Common myeloid progenitor, CD34-positive (primary cell): ENCODE measurements at regions of chr16 and their contacts with region 1.

Region 1: GRCh38 chr16:50281964-50282538 is 15.7 kb downstream of the ADCY7 start:
- DNase-seq: peak; percentile 98 to 100 (median 99)
- H3K4me3 ChIP-seq: peak overlapping the region in 5 of 7 experiments; percentile 30 to 67 (median 59)
- H3K27ac ChIP-seq: peak overlapping the region; percentile 17 to 74
- H3K4me1 ChIP-seq: peaks cover 28 to 84% (median 78%) of the 10 kb centered on the region in 4 experiments
- H3K27me3 ChIP-seq: no peaks in the 10 kb centered on the region

Region 2: GRCh38 chr16:50234771-50235556 is 47.1 kb before region 1 on chr16:
- CTCF ChIA-PET with region 1: no interaction called
- POLR2A ChIA-PET with region 1: no interaction called
- DNase-seq: no peak
- H3K4me3 ChIP-seq: no peak overlapping the region
- H3K27ac ChIP-seq: no peak overlapping the region
- H3K4me1 ChIP-seq: no peaks in the 10 kb centered on the region
- H3K27me3 ChIP-seq: no peaks in the 10 kb centered on the region

Region 3: DNA sequence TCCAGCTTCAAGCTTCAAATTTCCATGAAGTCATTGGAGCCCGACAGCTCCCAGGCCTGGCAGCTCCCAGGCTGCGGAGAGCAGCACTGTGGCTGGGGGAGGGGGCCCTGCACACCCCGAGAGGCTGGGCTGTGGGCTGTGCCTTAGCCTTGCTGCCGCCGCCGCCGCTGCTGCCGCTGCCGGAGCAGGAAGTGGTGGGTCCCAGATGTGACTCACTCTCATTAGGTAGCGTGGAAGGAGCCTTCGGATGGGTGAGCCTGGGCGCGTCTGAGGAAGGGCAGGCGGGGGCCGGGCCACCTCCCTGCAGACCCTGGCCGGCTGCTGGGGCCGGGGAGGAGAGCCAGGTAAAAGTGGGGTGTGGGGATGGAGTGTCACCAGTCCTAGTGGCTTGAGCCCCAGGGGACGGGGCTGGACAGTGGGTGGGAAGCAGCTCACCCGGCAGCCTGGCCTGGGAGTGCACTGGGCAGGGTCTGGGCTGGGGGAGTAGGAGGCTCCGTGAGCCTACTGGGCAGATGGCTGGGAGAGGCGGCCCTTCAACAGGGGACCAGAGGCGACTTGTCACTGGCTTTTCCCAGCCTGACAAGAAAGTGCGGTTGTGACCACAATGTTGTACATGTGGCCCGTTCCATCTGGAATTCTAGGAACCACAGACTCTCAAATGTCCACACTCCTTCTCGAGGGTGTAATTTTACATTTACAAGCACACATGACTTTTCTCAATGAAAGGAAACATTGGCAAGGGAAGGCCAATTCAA is 15.5 kb before region 1 on chr16 and contains the start of gene ADCY7:
- CTCF ChIA-PET with region 1: interaction called, 274 read pairs
- POLR2A ChIA-PET with region 1: interaction called, 16 read pairs
- DNase-seq: peak; percentile 73 to 94 (median 85)
- H3K4me3 ChIP-seq: peak within 1 kb of the TSS; percentile 36 to 74 (median 64)
- H3K27ac ChIP-seq: peak within 1 kb of the TSS; percentile 33 to 86
- H3K4me1 ChIP-seq: peaks cover 7 to 98% (median 68%) of the 10 kb centered on the region in 4 experiments
- H3K27me3 ChIP-seq: no peaks in the 10 kb centered on the region

Region 4: DNA sequence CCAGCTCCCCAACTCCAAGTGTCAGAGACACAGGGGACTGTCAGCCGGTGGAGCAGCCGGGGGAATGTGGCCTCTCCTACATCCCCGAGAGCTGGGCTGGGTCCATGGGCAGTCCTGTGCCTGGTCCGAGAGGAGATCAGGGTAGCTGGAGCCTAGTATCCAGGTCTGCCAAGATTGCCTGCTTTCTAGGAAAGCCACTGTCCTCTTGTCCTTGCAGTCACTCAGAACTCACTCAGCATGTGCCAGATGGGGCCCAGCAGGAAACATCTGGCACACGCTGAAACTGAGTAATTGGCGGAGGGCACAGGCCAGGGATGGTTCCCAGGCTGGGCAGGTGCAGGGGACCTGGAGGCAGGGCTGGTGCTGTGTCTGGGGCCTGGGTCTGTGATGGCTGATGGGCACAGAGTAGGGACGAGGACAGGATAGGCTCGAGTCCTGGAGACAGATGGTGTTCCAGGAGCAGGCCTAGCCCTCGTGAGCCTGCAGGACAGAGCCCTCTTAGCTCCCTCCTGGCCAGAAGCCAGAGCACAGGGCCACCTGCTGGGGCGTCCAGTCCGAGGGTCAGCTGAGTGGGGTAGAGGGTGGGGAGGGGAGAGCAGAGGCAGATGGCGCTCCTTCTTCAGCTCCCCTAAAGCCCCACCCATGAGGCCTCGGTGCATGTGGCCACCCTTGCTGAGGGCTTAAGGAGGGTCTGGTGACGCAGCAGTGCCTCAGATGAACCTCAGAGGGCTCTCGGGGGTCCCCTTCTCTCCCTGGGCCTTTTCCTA is 15.4 kb after region 1 on chr16:
- CTCF ChIA-PET with region 1: interaction called, 20 read pairs
- POLR2A ChIA-PET with region 1: interaction called, 10 read pairs
- DNase-seq: peak in 2 of 3 donors; percentile 69 to 83
- H3K4me3 ChIP-seq: no peak overlapping the region
- H3K27ac ChIP-seq: no peak overlapping the region
- H3K4me1 ChIP-seq: peaks cover 0 to 16% (median 8%) of the 10 kb centered on the region in 4 experiments
- H3K27me3 ChIP-seq: no peaks in the 10 kb centered on the region

Region 5: GRCh38 chr16:50335196-50335958 is 53.3 kb after region 1 on chr16:
- CTCF ChIA-PET with region 1: no interaction called
- POLR2A ChIA-PET with region 1: no interaction called
- DNase-seq: peak in 2 of 3 donors; percentile 55 to 57
- H3K4me3 ChIP-seq: no peak overlapping the region
- H3K27ac ChIP-seq: peak overlapping the region in 1 of 2 experiments; percentile 56
- H3K4me1 ChIP-seq: peaks cover 0 to 17% (median 0%) of the 10 kb centered on the region in 4 experiments
- H3K27me3 ChIP-seq: no peaks in the 10 kb centered on the region

Region 6: DNA sequence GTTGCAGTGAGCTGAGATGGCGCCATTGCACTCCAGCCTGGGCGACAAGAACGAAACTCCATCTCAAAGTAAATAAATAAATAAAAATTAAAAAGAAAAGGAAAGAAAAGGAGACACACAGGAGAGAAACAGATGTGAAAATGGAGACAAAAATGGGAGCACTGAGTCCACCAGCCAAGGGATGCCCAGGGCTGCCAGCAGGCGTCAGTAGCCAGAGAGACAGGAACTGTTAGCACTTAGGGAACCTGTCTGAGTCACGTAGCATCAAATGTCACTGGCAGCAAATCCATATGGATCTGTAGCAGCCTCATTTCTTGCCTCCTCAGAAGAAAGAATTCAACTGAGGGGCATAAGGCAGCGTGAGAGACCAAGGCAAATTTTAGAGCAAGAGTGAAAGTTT is 539.5 kb after region 1 on chr16:
- CTCF ChIA-PET with region 1: no interaction called
- POLR2A ChIA-PET with region 1: no interaction called
- DNase-seq: no peak
- H3K4me3 ChIP-seq: no peak overlapping the region
- H3K27ac ChIP-seq: no peak overlapping the region
- H3K4me1 ChIP-seq: peaks cover 0 to 5% (median 0%) of the 10 kb centered on the region in 4 experiments
- H3K27me3 ChIP-seq: no peaks in the 10 kb centered on the region